HEK293 (cell line): ENCODE measurements at regions of chr20 and their contacts with region 1.

Region 1: GRCh38 chr20:43525021-43525420 is 17.5 kb downstream of the L3MBTL1 start:
- H3K4me3 ChIP-seq: no peak overlapping the region
- H3K27ac ChIP-seq: no peak overlapping the region
- H3K4me1 ChIP-seq: no peaks in the 10 kb centered on the region
- CTCF ChIP-seq: no peak

Region 2: DNA sequence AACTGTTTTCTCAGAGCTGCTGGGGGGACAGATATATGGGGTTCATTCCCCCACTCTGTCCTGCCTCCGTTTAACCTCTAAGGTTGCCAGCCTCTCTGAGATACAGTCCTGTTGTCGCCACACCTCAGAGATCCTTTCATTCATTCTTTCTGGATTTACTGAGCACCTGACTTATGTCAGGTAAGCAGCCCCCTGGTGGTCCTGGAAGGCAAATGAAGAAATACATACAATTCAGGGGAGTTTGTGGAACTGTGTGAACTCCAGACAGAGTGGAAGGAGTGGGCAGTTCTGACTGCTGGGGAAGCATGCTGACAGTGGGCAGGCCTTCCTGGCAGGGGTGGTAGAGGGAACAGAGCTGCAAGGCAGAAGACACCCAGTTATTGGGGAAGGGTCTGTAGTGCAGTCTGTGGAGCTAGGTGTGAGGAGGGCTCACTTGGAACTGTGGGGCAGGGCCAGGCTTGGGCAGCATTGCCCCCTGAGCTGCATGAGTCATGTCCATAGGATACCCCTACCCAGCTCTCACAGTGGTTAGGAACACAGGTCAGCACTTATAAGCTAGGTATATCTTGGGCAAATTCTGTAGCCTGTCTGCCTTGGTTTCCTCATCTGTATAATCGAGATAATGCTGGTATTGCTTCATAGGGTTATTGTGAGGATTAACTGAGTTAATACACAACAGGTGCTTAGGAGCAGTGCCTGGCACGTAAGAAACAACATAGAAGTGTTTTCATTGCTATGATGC is 21.0 kb after region 1 on chr20:
- CTCF ChIA-PET with region 1: no interaction called
- POLR2A ChIA-PET with region 1: no interaction called
- H3K4me3 ChIP-seq: no peak overlapping the region
- H3K27ac ChIP-seq: no peak overlapping the region
- H3K4me1 ChIP-seq: no peaks in the 10 kb centered on the region
- CTCF ChIP-seq: no peak

Region 3: GRCh38 chr20:43744151-43744611 is 219.2 kb after region 1 on chr20:
- CTCF ChIA-PET with region 1: no interaction called
- POLR2A ChIA-PET with region 1: interaction called, 13 read pairs
- H3K4me3 ChIP-seq: no peak overlapping the region
- H3K27ac ChIP-seq: no peak overlapping the region
- H3K4me1 ChIP-seq: peaks cover 9% of the 10 kb centered on the region
- CTCF ChIP-seq: no peak